ENCODE measurements at regions of chr1 and their contacts with region 1.

Region 1: GRCh38 chr1:24805534-24806301 is 60.5 kb downstream of the CLIC4 start:
- DNase-seq: no peak

Region 2: DNA sequence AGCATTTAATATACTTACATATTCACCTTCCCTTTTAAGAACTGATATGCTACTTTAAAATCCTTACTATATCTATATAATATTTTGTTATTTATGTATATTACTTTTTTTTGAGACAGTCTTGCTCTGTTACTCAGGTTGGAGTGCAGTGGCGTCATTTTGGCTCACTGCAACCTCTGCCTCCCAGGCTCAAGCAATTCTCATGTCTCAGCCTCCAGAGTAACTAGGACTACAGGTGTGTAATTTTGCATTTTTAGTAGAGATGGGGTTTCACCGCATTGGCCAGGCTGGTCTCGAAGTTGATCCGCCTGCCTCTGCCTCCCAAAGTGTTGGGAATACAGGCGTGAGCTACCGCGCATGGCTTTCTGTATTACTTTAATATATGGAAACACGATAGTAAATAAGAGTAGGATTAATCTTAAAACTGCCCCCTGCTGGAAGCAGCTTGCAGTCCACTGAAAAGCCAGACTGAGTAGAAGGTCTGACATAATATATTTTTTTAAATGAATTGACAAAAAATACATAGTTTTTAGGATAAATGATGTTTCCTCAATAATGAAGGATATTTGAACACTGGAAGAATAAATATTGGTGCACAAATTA is 278.7 kb before region 1 on chr1:
- in situ Hi-C with region 1: loop called (anchors 25 kb)
- DNase-seq: peak; percentile 67

Region 3: GRCh38 chr1:24673336-24673735 is 132.4 kb before region 1 on chr1:
- in situ Hi-C with region 1: loop called (anchors 25 kb)
- DNase-seq: peak; percentile 46